Naive thymus-derived CD4-positive, alpha-beta T cell (primary cell): ENCODE measurements at regions of chr4 and their contacts with region 1.

Region 1: DNA sequence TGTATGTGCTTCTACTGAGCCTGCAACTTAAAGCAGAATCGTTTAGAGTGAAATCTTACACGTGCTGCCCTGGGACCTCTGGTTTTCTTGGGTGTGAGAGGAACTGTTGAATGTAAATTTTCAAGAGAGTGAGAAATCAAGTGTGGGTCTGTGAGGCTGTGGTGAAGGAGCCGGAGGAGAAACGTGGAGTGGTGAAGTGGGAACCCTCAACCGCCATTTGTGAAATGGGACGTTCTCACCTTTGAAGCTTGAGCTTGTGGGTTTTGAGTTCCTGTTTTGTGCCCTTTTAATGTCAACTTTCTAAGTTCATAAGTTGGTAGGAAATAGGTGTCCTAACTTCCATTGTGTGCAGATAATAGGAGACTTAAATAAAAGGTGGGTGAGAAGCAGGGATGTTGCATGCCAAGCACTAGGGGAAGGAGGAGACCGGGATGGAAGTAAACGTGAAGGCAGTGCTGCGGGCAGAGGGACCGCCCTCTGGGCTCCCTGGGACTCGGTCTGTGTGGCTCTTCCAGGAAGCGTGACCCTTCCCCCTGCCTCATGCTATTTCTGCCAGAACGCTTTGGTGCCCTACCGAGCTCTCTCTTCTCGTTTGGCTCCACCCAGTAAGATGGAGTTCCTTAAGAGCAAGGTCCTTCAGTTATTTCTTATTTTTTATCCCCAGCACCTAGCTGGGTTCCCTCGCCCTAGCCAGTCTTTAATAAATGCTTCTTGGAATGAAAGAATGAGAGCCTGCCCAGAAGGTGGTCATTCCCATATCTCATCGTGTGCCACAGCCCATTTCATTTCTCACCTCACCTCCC is 56.0 kb downstream of the TMEM131L start:
- DNase-seq: peak in 8 of 9 donors; percentile 52 to 82 (median 78)
- ATAC-seq: peak; percentile 73
- H3K4me3 ChIP-seq: peak overlapping the region; percentile 50
- H3K4me3 Mint-ChIP-seq: peak overlapping the region; percentile 80 to 90 (median 84)
- H3K27ac ChIP-seq: peak overlapping the region; percentile 68
- H3K27ac Mint-ChIP-seq: peak overlapping the region; percentile 88 to 96 (median 93)
- H3K4me1 ChIP-seq: peaks cover 75 to 87% of the 10 kb centered on the region in 2 donors
- H3K4me1 Mint-ChIP-seq: peaks cover 85 to 99% (median 98%) of the 10 kb centered on the region in 7 donors
- H3K27me3 ChIP-seq: no peaks in the 10 kb centered on the region
- H3K27me3 Mint-ChIP-seq: no peaks in the 10 kb centered on the region

Region 2: DNA sequence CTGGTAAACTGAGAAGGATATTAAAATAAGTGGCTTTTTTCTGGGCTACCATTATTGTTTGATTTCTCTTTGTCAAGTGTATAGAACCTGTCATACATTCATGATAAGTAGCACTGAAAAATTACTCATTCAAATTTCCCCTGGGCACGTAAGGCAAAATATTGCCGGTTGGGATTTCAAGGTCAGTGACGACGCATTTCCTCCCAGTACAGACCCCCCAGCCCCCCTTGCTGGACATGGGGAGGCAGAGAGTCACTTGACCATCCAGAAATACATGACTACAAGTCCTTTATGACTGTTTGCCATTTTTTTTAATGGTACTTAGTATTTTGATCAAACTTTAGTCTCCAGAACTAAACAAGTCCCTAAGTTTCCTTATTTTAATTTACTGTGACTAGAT is 184.5 kb before region 1 on chr4:
- CTCF ChIA-PET with region 1: no interaction called
- POLR2A ChIA-PET with region 1: no interaction called
- intact Hi-C with region 1: no loop called
- DNase-seq: no peak
- ATAC-seq: no peak
- H3K4me3 ChIP-seq: no peak overlapping the region
- H3K4me3 Mint-ChIP-seq: no peak overlapping the region
- H3K27ac ChIP-seq: no peak overlapping the region
- H3K27ac Mint-ChIP-seq: no peak overlapping the region
- H3K4me1 ChIP-seq: no peaks in the 10 kb centered on the region
- H3K4me1 Mint-ChIP-seq: peaks cover 0 to 10% (median 0%) of the 10 kb centered on the region in 7 donors
- H3K27me3 ChIP-seq: no peaks in the 10 kb centered on the region
- H3K27me3 Mint-ChIP-seq: peaks cover 0 to 28% (median 6%) of the 10 kb centered on the region in 5 donors

Region 3: DNA sequence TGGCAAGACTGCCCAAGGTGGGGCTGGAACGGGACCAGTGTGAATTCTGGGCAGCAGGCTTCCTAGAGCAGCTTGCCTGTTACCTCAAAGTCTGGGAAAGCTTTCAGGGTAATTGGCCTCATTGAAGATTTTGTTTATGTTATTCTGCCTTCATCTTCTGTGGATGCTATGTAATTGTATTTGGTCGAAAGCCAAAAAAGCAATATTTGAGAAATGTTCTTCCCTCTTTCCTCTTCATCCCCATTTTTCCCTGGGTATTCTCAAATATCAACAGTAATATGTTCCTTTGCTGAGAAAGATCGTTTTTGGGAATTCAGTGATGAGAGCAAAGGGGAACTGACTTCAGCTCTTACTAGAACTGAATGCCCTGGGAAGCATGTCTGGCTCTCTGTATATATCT is 43.1 kb before region 1 on chr4:
- CTCF ChIA-PET with region 1: interaction called, 4 read pairs
- POLR2A ChIA-PET with region 1: interaction called, 122 read pairs
- intact Hi-C with region 1: no loop called
- DNase-seq: no peak
- ATAC-seq: no peak
- H3K4me3 ChIP-seq: no peak overlapping the region
- H3K4me3 Mint-ChIP-seq: peak overlapping the region in 7 of 10 donors; percentile 17 to 67 (median 55)
- H3K27ac ChIP-seq: peak overlapping the region; percentile 41
- H3K27ac Mint-ChIP-seq: peak overlapping the region in 8 of 9 donors; percentile 41 to 98 (median 86)
- H3K4me1 ChIP-seq: peaks cover 5 to 60% of the 10 kb centered on the region in 2 donors
- H3K4me1 Mint-ChIP-seq: peaks cover 59 to 95% (median 80%) of the 10 kb centered on the region in 7 donors
- H3K27me3 ChIP-seq: no peaks in the 10 kb centered on the region
- H3K27me3 Mint-ChIP-seq: no peaks in the 10 kb centered on the region

Region 4: GRCh38 chr4:153497988-153498967 is 23.9 kb before region 1 on chr4:
- CTCF ChIA-PET with region 1: interaction called, 7 read pairs
- POLR2A ChIA-PET with region 1: interaction called, 23 read pairs
- intact Hi-C with region 1: loop called (anchors 1 kb)
- DNase-seq: peak in 4 of 9 donors; percentile 31 to 46 (median 44)
- ATAC-seq: peak; percentile 60
- H3K4me3 ChIP-seq: peak overlapping the region; percentile 20
- H3K4me3 Mint-ChIP-seq: peak overlapping the region; percentile 74 to 85 (median 80)
- H3K27ac ChIP-seq: peak overlapping the region; percentile 83
- H3K27ac Mint-ChIP-seq: peak overlapping the region; percentile 94 to 100 (median 98)
- H3K4me1 ChIP-seq: peaks cover 37 to 89% of the 10 kb centered on the region in 2 donors
- H3K4me1 Mint-ChIP-seq: peaks cover 72 to 99% (median 91%) of the 10 kb centered on the region in 7 donors
- H3K27me3 ChIP-seq: no peaks in the 10 kb centered on the region
- H3K27me3 Mint-ChIP-seq: no peaks in the 10 kb centered on the region

Region 5: GRCh38 chr4:153535772-153536513 is 13.7 kb after region 1 on chr4:
- CTCF ChIA-PET with region 1: interaction called, 5 read pairs
- POLR2A ChIA-PET with region 1: interaction called, 7 read pairs
- intact Hi-C with region 1: loop called in 1 of 2 experiments (anchors 2 kb)
- DNase-seq: peak in 2 of 9 donors; percentile 34 to 39
- ATAC-seq: peak; percentile 52
- H3K4me3 ChIP-seq: no peak overlapping the region
- H3K4me3 Mint-ChIP-seq: peak overlapping the region; percentile 16 to 79 (median 63)
- H3K27ac ChIP-seq: peak overlapping the region; percentile 62
- H3K27ac Mint-ChIP-seq: peak overlapping the region; percentile 80 to 98 (median 91)
- H3K4me1 ChIP-seq: peaks cover 29 to 87% of the 10 kb centered on the region in 2 donors
- H3K4me1 Mint-ChIP-seq: peaks cover 58 to 100% (median 94%) of the 10 kb centered on the region in 7 donors
- H3K27me3 ChIP-seq: no peaks in the 10 kb centered on the region
- H3K27me3 Mint-ChIP-seq: no peaks in the 10 kb centered on the region

Region 6: GRCh38 chr4:153713866-153714646 is 191.9 kb after region 1 on chr4:
- CTCF ChIA-PET with region 1: no interaction called
- POLR2A ChIA-PET with region 1: no interaction called
- intact Hi-C with region 1: no loop called
- DNase-seq: no peak
- ATAC-seq: no peak
- H3K4me3 ChIP-seq: no peak overlapping the region
- H3K4me3 Mint-ChIP-seq: no peak overlapping the region
- H3K27ac ChIP-seq: no peak overlapping the region
- H3K27ac Mint-ChIP-seq: no peak overlapping the region
- H3K4me1 ChIP-seq: no peaks in the 10 kb centered on the region
- H3K4me1 Mint-ChIP-seq: peaks cover 0 to 6% (median 0%) of the 10 kb centered on the region in 7 donors
- H3K27me3 ChIP-seq: no peaks in the 10 kb centered on the region
- H3K27me3 Mint-ChIP-seq: peaks cover 0 to 16% (median 0%) of the 10 kb centered on the region in 5 donors